ENCODE measurements at regions of chr9 and their contacts with region 1.

Region 1: GRCh38 chr9:133347985-133348717 is at the starts of genes MED22 and RPL7A:
- DNase-seq: peak; percentile 91 to 95
- ATAC-seq: peak; percentile 87 to 93 (median 90)
- H3K4me3 ChIP-seq: peak within 1 kb of the TSS; percentile 97
- H3K27ac ChIP-seq: peak within 1 kb of the TSS; percentile 91
- H3K4me1 ChIP-seq: peaks cover 29% of the 10 kb centered on the region
- H3K27me3 ChIP-seq: no peaks in the 10 kb centered on the region
- CTCF ChIP-seq: no peak
- total RNA-seq, gene MED22: 7.5 to 14.4 (median 10.6) TPM
- total RNA-seq, gene RPL7A: 1,013 to 1,526 (median 1,062) TPM

Region 2: DNA sequence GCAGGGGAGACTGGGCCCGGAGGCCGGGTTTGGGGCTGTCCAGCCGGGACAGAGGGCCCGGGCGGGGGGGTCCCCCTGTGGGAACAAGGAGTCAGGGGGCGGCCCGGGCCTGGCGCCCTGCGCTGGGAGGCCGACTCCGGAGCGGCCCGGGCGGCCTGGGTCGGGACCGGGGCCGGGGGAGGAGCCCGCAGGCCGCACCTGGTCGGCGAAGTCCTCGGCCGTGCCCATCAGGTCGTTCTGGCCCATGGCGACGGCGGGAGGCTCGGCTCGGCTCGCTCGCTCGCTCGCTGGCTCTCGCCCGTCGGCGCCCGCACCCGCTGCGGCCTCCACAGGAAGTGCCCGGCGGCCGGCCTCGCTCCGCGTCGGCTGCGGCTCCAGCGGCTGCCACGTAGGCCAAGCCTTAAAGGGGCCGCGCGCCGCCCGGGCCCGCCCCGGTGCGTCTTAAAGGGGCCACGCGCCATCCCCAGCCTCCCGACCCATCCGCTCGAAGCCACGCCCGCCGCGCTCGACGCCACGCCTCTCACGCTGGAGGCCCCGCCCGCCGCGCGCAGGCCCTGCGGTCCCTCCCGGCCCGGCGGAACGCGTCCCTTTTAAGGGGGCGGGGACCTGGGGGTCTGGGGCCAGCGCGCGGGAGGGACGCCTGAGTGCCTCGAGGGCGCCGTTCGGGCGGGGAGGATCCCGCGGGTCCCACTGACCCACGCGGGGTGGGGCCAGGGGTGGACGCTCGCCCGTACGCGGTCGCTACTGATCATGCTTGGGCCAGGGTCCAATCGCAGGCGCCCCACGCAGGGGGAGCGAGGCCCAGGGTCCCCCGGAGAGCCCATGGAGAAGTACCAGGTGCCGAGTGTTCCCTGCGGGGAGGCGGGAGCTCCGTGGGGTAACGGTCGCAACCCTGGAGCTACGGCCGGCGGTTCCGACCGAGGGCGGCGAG is 27.8 kb after region 1 on chr9 and contains the starts of genes STKLD1 and SURF4:
- intact Hi-C with region 1: loop called in 1 of 2 experiments (anchors 2 kb)
- DNase-seq: peak; percentile 96 to 98
- ATAC-seq: peak; percentile 96 to 98 (median 98)
- H3K4me3 ChIP-seq: peak within 1 kb of the TSS; percentile 100
- H3K27ac ChIP-seq: peak within 1 kb of the TSS; percentile 97
- H3K4me1 ChIP-seq: peaks cover 41% of the 10 kb centered on the region
- H3K27me3 ChIP-seq: no peaks in the 10 kb centered on the region
- CTCF ChIP-seq: no peak
- total RNA-seq, gene STKLD1: 0.28 to 0.69 (median 0.46) TPM
- total RNA-seq, gene SURF4: 45.6 to 69.4 (median 66.8) TPM

Region 3: DNA sequence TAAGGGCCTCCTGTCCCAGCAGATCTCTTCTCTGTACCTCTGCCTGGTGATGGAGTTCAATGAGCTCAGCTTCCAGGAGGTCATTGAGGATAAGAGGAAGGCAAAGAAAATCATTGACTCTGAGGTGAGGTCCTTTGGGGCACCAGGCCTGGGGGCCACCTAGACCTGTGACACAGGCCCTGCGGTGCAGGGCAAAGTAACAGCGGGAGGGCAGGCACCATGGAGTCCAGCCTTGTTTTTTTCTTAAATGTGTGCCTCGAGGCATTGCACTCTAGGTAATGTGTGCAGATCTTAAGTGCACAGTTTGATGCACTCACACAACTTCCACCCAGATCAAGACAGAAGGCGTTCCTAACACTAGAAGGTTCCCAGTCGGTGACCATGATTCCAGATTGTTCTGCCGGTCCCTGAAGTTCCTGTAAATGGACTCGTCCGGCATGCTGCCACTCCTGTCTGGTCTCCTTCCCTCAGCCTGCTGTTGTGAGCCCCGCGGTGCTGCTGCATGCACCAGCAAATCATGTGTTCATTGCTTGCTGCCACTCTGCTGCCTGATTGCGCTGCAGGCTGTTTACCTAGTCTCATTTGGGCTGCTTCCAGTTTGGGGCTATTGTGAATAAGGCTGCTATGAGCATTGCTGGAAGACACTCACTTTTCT is 39.4 kb after region 1 on chr9:
- intact Hi-C with region 1: no loop called
- DNase-seq: no peak
- ATAC-seq: no peak
- H3K4me3 ChIP-seq: no peak overlapping the region
- H3K27ac ChIP-seq: no peak overlapping the region
- H3K4me1 ChIP-seq: no peaks in the 10 kb centered on the region
- H3K27me3 ChIP-seq: peaks cover 0 to 10% (median 0%) of the 10 kb centered on the region in 3 donors
- CTCF ChIP-seq: no peak

Region 4: GRCh38 chr9:133478851-133479711 is 130.9 kb after region 1 on chr9 and contains the start of gene SLC2A6:
- intact Hi-C with region 1: loop called in 1 of 2 experiments (anchors 5 kb)
- DNase-seq: peak; percentile 89 to 91
- ATAC-seq: peak; percentile 97 to 100 (median 98)
- H3K4me3 ChIP-seq: peak within 1 kb of the TSS; percentile 75
- H3K27ac ChIP-seq: peak within 1 kb of the TSS; percentile 60
- H3K4me1 ChIP-seq: peaks cover 6% of the 10 kb centered on the region
- H3K27me3 ChIP-seq: no peaks in the 10 kb centered on the region
- CTCF ChIP-seq: no peak
- total RNA-seq, gene SLC2A6: 1.2 to 2.7 (median 1.7) TPM